Heart left ventricle (tissue), 16 donors: ENCODE measurements at regions of chr1 and their contacts with region 1.

Region 1: GRCh38 chr1:151968058-151968457 is 25.6 kb downstream of the S100A10 start:
- DNase-seq: peak in 2 of 5 donors; percentile 25 to 37
- ATAC-seq: peak in 3 of 4 donors; percentile 72 to 79 (median 77)
- H3K4me3 ChIP-seq: no peak overlapping the region
- H3K27ac ChIP-seq: no peak overlapping the region
- H3K4me1 ChIP-seq: peaks cover 0 to 35% (median 12%) of the 10 kb centered on the region in 12 donors
- H3K27me3 ChIP-seq: no peaks in the 10 kb centered on the region
- CTCF ChIP-seq: peak; percentile 56 to 75 (median 68)
- POLR2A ChIP-seq: no peak

Region 2: DNA sequence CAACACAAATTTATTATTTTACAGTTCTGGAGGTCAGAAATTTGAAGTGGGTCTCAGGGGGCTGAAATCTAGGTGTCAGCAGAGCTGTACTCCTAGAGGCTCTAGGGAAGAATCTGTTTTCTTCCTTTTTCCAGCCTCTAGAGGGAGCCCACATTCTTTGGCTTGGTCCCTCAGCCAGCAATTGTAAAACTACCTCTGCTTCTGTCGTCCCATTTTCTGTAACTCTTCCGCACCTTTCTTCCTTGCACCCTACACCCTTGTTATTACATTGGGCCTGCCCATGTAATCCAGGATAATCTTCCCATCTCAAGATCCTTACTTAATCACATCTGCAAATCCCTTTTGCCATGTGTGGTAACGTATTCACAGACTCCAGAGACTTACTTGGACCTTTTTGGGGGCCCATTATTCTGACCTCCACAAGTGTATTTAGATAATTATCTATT is 34.0 kb before region 1 on chr1:
- intact Hi-C with region 1: loop called in 2 of 10 experiments (anchors 5 kb)
- DNase-seq: peak in 2 of 5 donors; percentile 30 to 48
- ATAC-seq: peak; percentile 71 to 91 (median 86)
- H3K4me3 ChIP-seq: no peak overlapping the region
- H3K27ac ChIP-seq: no peak overlapping the region
- H3K4me1 ChIP-seq: no peaks in the 10 kb centered on the region
- H3K27me3 ChIP-seq: no peaks in the 10 kb centered on the region
- CTCF ChIP-seq: peak; percentile 73 to 95 (median 86)
- POLR2A ChIP-seq: no peak